HepG2 (cell line): ENCODE measurements at regions of chr6 and their contacts with region 1.

Region 1: DNA sequence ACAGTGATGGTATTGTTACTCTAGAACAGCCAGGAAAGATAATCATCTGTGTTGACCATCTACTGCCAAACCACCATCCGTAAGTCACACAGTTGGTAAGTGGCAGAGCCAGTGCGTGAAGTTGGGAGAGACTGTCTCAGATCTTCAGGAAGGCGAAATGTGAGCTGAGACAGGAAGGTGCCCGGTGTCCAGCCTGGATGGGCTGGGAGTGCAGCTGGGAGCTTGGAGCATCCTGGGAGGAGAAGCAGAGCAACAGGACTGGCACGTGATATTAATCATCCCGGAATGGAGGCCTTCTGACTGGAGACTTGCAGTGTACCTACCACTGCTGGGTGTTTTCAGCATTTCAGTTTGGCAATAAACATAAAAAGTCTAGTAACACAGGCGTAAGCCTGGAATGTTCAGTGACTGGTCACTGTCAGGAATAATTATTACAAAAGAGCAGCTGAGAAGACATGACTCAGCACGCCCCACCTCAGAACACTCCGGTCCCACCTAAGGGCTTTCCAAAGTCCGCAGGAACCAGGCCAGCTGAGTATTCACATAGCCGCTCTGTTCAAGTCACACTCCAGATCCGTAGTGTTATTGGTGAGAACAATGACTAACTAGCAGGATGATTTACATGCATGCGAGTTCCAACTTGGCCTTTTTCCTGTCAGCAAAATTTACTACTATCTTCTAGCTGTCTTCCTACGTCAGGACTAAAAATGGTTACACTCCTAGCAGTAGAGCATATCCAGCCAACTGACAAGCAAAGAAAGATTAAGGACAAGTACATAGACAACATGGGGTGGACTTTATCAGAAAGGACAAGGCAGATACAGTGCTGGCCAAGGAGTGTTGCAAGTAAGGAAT is 45.1 kb upstream of the PNRC1 start:
- DNase-seq: peak; percentile 73
- ATAC-seq: peak; percentile 87
- H3K4me3 ChIP-seq: peak overlapping the region; percentile 20 to 69 (median 59)
- H3K27ac ChIP-seq: peak overlapping the region; percentile 73
- H3K4me1 ChIP-seq: peaks cover 35% of the 10 kb centered on the region
- H3K27me3 ChIP-seq: no peaks in the 10 kb centered on the region; a peak in 1 of 5 replicates
- CTCF ChIP-seq: no peak
- EP300 ChIP-seq: peak in 1 of 2 experiments; percentile 28; a peak in 1 of 4 replicates
- POLR2A ChIP-seq: peak in 1 of 2 experiments; percentile 53; a peak in 2 of 4 replicates
- RAD21 ChIP-seq: no peak

Region 2: DNA sequence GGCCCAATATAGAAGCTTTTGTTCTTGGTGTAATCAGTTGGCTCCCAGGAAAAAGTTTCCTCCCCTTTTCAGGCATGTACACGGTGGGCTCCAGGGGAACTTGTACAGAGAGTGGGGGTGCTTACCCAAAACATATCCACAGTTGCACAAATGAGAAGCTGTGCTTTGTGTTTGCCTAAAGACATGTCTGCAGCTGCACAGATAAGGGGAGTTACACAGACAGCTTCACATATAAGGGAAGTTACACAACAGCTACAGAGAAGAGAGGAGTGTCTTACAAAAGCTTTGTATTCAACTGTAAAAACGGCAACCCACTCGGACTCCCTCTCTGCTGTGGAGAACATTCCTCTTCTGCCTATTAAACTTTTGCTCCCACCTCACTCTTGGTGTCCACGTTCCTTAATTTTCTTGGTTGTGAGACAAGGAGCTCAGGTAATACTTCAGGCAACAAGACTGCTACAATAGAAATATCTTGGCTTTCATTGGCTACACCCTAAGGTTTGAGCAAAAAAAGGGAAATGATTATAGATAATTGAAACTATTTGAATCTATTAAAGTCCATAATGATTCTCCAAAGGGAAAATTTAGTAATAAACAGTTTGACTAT is 37.6 kb after region 1 on chr6:
- CTCF ChIA-PET with region 1: no interaction called
- POLR2A ChIA-PET with region 1: interaction called, 4 read pairs
- in situ Hi-C with region 1: no loop called
- intact Hi-C with region 1: loop called (anchors 5 kb)
- DNase-seq: peak; percentile 57
- ATAC-seq: peak; percentile 73
- H3K4me3 ChIP-seq: peak overlapping the region in 2 of 3 experiments; percentile 1 to 38; a peak in 3 of 6 replicates
- H3K27ac ChIP-seq: no peak overlapping the region
- H3K4me1 ChIP-seq: peaks cover 48% of the 10 kb centered on the region
- H3K27me3 ChIP-seq: no peaks in the 10 kb centered on the region
- CTCF ChIP-seq: no peak
- EP300 ChIP-seq: no peak
- POLR2A ChIP-seq: no peak
- RAD21 ChIP-seq: no peak